ENCODE measurements at regions of chr19 and their contacts with region 1.

Region 1: DNA sequence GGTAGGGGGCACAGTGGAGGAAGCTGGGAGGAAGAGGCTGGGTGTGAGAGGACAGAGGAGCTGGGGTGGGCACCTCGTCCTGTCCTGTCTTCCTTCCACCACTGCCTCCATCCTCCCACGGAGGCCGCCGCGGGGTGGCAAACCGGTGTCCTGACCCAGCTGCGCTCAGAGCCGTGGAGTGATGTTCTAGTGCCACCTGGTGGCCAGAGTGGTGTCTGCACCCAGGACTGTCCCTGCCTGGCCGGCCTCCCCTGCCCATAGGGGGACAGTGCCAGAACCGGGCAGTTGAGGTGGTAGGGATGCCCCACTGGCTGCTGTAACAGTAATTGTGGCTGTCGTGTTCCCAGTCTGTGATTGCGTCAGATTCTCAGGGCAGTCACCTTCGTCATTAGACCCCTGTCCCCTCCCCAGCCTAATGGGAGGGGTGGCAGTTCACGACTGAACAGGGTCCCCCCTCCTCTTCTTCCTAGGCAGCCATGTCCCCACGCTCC is 11.1 kb upstream of the ARRDC2 start:
- DNase-seq: peak; percentile 82
- H3K27ac ChIP-seq: peak overlapping the region; percentile 9; the same call in 1 of the 2 replicates
- CTCF ChIP-seq: peak; percentile 98

Region 2: DNA sequence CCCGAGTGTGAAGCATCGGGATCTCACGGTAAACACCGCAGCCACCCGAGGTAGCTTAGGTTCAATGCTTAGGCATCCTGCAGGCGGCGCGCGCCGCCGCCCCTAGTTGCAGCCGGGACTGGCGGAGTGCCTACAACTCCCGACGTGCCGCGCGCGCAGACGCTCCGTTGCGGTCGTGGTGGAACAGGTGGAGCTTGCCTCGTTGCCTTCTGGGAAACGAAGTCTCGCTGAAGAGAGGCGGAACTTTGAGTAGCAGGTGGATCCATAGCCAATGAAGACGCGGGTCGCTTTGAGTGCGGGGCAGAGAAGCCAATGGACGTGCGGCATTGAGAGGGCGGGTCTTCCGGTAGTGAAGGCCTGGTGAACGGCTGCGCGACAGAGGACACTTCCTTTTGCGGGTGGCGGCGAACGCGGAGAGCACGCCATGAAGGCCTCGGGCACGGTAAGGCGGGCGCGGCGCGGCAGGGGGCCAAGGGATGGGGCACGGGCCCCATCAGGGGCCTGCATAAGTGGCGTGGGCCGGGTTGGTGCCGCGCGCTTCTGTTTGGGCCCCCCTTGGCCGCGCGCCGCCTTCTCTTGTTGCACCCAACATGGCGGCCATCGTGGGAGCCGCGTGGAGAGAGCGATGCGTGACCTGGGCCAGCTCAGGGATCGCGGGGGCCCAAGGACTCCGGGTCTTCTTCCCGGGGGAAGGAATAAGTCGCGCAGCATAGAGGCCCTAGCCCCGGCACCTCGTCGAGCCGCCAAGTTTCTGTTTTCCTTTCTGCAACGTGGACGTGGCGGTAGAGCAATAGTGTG is 137.1 kb before region 1 on chr19 and contains the start of gene RPL18A:
- CTCF ChIA-PET with region 1: interaction called, 13 read pairs
- POLR2A ChIA-PET with region 1: no interaction called
- DNase-seq: peak; percentile 97
- H3K27ac ChIP-seq: peak within 1 kb of the TSS; percentile 77
- CTCF ChIP-seq: peak; percentile 98

Region 3: DNA sequence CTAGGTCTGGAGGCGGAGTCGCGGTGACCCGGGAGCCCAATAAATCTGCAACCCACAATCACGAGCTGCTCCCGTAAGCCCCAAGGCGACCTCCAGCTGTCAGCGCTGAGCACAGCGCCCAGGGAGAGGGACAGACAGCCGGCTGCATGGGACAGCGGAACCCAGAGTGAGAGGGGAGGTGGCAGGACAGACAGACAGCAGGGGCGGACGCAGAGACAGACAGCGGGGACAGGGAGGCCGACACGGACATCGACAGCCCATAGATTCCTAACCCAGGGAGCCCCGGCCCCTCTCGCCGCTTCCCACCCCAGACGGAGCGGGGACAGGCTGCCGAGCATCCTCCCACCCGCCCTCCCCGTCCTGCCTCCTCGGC is 125.0 kb before region 1 on chr19 and contains the start of gene SLC5A5:
- CTCF ChIA-PET with region 1: interaction called, 10 read pairs
- POLR2A ChIA-PET with region 1: no interaction called
- DNase-seq: no peak
- H3K27ac ChIP-seq: no peak within 1 kb of the TSS
- CTCF ChIP-seq: no peak

Region 4: DNA sequence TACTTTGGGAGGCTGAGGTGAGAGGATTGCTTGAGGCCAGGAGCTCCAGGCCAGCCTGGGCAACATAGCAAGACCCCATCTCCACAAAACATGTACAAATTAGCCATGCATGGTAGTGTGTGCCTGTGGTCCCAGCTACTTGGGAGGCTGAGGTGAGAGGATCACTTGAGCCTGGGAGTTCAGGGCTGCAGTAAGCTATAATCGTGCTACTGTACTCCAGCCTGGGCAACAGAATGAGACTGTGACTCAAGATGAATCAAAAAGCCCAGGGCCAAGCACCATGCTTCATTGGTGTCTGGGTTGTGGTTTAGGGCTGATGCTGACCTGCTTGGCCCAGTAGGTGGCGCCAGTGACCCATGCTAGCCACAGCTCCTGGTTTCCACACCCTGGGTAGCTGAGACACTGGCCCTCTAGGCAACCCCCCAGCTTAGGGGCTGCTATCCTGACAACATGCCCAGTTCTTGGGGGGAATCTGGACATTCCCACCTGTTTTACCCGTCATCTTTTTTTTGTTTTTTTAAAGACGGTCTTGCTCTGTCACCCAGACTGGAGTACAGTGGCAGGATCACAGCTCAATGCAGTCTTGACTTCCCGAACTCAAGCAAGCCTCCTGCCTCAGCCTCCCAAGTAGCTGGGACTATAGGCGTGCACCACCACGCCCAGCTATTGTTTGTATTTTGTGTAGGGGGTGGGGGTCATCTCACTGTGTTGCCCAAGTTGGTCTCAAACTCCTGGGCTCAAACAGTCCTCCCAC is 58.6 kb before region 1 on chr19:
- CTCF ChIA-PET with region 1: interaction called, 71 read pairs
- POLR2A ChIA-PET with region 1: no interaction called
- DNase-seq: peak; percentile 89
- H3K27ac ChIP-seq: peak overlapping the region; percentile 30
- CTCF ChIP-seq: peak; percentile 96

Region 5: DNA sequence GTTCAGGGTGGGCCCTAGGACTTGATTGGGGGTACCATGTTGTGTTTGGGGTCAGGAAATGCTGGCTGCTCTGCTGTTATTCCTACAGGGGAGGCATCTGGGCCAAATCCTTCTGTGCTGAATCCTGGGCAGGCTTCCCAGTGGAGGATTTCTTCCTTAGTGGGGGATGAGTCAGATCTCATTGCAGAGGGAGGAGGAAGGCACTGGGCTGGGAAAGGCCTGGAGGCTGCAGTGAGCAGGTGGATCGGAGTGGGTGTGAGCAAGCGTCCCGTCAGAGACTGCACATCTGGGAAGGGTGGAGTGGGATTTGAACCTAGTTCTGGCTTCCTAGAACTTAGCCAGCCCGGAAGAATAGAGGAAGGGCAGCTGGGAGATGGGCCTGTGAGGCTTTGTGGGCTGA is 52.6 kb before region 1 on chr19:
- CTCF ChIA-PET with region 1: interaction called, 71 read pairs
- POLR2A ChIA-PET with region 1: interaction called, 3 read pairs
- DNase-seq: peak; percentile 86
- H3K27ac ChIP-seq: peak overlapping the region; percentile 74
- CTCF ChIP-seq: no peak

Region 6: GRCh38 chr19:18029617-18030338 is 32.9 kb after region 1 on chr19:
- CTCF ChIA-PET with region 1: no interaction called
- POLR2A ChIA-PET with region 1: no interaction called
- DNase-seq: no peak
- H3K27ac ChIP-seq: no peak overlapping the region
- CTCF ChIP-seq: no peak